AG04450 (cell line): ENCODE measurements at regions of chr5 and their contacts with region 1.

Region 1: GRCh38 chr5:73066466-73066865 is 53.9 kb upstream of the TMEM171 start:
- DNase-seq: peak; percentile 56
- H3K4me3 ChIP-seq: no peak overlapping the region
- H3K27ac ChIP-seq: peak overlapping the region; percentile 68
- H3K27me3 ChIP-seq: no peaks in the 10 kb centered on the region
- CTCF ChIP-seq: no peak

Region 2: GRCh38 chr5:73031839-73032238 is 34.6 kb before region 1 on chr5:
- CTCF ChIA-PET with region 1: no interaction called
- POLR2A ChIA-PET with region 1: no interaction called
- DNase-seq: peak; percentile 66
- H3K4me3 ChIP-seq: no peak overlapping the region
- H3K27ac ChIP-seq: no peak overlapping the region
- H3K27me3 ChIP-seq: no peaks in the 10 kb centered on the region
- CTCF ChIP-seq: no peak

Region 3: DNA sequence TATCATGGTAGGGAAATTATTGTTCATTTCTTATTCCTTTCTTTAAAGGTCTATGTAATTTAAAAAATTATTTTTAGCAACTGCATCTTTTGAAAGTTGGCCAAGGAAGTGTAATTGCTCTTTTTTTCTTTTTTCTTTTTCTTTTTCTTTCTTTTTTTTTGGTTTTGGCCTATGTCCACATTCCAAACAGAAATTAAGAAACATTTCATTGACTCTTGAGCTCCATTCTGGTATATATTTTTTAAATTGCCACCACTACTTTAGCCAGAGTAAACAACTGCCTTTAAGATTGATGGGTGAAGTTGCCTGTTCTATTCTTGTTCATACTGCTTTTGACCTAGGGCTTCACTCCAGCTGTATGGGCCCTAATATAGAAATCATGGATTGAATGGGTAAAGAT is 21.9 kb before region 1 on chr5:
- CTCF ChIA-PET with region 1: interaction called, 3 read pairs
- POLR2A ChIA-PET with region 1: interaction called, 12 read pairs
- DNase-seq: no peak
- H3K4me3 ChIP-seq: no peak overlapping the region
- H3K27ac ChIP-seq: no peak overlapping the region
- H3K27me3 ChIP-seq: no peaks in the 10 kb centered on the region
- CTCF ChIP-seq: no peak

Region 4: GRCh38 chr5:73088026-73088425 is 21.6 kb after region 1 on chr5:
- CTCF ChIA-PET with region 1: interaction called, 16 read pairs
- POLR2A ChIA-PET with region 1: no interaction called
- DNase-seq: no peak
- H3K4me3 ChIP-seq: no peak overlapping the region
- H3K27ac ChIP-seq: no peak overlapping the region
- H3K27me3 ChIP-seq: no peaks in the 10 kb centered on the region
- CTCF ChIP-seq: no peak